OCI-LY7 (cell line): ENCODE measurements at regions of chr10 and their contacts with region 1.

Region 1: DNA sequence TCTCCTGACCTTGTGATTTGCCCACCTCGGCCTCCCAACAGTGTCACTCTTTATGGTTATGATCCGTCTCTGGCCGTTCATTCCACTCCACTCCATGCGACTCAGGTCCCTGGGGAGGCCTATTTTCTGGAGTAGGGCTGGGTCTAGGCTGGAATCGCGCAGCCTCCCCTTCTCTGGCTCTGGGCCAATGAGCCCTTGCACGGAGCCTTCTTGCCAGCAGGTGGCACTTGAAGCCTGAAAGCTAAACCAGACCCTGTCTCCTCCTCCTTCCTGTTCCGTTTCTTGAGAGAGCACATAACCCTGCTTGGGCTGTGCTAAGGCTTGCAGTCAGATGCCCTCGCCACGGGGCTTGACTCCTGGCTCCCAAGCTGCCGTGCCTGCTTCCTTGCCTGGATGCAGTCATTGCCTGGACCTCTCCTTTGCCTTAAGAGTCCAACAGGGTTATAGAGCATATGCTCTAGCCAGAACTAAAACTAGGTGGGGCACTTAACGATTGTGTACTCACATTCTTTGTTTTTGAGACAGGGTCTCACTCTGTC is 9.6 kb upstream of the DNAJB12 start:
- DNase-seq: peak; percentile 93
- H3K4me3 ChIP-seq: no peak overlapping the region
- H3K27ac ChIP-seq: no peak overlapping the region
- H3K4me1 ChIP-seq: peaks cover 6% of the 10 kb centered on the region
- CTCF ChIP-seq: peak; percentile 95

Region 2: GRCh38 chr10:72386916-72387586 is 22.7 kb after region 1 on chr10:
- CTCF ChIA-PET with region 1: no interaction called
- POLR2A ChIA-PET with region 1: no interaction called
- intact Hi-C with region 1: no loop called
- DNase-seq: no peak
- H3K4me3 ChIP-seq: no peak overlapping the region
- H3K27ac ChIP-seq: no peak overlapping the region
- H3K4me1 ChIP-seq: no peaks in the 10 kb centered on the region
- CTCF ChIP-seq: no peak

Region 3: DNA sequence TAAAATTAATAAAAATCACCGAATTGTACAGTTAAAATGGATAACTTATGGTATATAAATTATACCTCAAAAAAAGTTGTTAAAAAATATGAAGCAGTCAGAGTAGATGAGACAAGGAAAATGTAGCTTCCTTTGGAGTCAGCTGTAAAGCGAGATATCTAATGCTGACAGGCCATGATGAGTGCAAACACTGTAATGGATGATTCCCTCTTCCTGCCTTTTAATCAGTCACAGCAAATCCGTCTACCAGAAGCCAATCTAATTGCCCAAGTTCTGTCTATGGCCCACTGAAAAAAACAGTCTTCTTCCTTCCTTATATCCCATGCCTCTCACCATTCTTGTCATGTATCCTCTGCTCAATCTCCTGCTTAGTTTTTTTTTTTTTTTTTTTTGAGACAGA is 50.3 kb after region 1 on chr10:
- CTCF ChIA-PET with region 1: no interaction called
- POLR2A ChIA-PET with region 1: no interaction called
- intact Hi-C with region 1: no loop called
- DNase-seq: no peak
- H3K4me3 ChIP-seq: no peak overlapping the region
- H3K27ac ChIP-seq: no peak overlapping the region
- H3K4me1 ChIP-seq: no peaks in the 10 kb centered on the region
- CTCF ChIP-seq: no peak

Region 4: DNA sequence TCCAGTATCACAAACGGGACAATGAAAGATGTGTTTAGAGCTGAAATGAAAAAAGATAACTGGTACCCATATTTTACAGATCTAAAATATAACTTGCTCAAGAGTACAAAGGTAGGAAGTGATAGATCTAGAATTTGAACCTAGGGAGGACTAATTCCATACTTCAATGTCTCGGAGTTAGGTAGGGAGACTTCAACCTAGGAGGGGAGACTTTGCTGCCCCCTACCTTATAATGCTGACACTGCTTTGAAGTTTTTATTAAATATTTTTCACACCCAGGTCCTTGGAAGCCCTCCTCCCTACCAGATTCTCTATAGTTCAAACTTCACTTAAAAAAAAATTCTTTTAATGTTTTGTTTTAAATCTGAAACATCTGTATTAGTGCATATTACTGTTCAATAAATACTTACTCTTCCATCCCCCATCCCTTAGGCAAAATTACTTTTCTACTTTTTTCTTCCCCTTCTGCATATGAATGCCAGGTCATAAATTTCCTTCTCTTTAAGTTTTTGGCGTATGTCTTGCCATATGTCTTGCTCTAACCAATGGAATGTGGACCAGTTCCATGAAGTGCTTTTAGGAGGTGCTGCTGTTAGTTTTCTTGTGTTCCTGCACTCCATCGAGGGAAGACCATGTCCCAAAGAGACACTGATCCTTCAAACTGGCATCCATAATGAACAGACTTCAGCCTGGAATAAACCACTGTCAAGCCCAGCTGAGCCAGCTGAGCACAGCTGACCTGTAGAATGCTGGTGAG is 203.8 kb after region 1 on chr10:
- CTCF ChIA-PET with region 1: no interaction called
- POLR2A ChIA-PET with region 1: no interaction called
- intact Hi-C with region 1: loop called (anchors 5 kb)
- DNase-seq: peak; percentile 26
- H3K4me3 ChIP-seq: no peak overlapping the region
- H3K27ac ChIP-seq: no peak overlapping the region
- H3K4me1 ChIP-seq: no peaks in the 10 kb centered on the region
- CTCF ChIP-seq: peak; percentile 79

Region 5: DNA sequence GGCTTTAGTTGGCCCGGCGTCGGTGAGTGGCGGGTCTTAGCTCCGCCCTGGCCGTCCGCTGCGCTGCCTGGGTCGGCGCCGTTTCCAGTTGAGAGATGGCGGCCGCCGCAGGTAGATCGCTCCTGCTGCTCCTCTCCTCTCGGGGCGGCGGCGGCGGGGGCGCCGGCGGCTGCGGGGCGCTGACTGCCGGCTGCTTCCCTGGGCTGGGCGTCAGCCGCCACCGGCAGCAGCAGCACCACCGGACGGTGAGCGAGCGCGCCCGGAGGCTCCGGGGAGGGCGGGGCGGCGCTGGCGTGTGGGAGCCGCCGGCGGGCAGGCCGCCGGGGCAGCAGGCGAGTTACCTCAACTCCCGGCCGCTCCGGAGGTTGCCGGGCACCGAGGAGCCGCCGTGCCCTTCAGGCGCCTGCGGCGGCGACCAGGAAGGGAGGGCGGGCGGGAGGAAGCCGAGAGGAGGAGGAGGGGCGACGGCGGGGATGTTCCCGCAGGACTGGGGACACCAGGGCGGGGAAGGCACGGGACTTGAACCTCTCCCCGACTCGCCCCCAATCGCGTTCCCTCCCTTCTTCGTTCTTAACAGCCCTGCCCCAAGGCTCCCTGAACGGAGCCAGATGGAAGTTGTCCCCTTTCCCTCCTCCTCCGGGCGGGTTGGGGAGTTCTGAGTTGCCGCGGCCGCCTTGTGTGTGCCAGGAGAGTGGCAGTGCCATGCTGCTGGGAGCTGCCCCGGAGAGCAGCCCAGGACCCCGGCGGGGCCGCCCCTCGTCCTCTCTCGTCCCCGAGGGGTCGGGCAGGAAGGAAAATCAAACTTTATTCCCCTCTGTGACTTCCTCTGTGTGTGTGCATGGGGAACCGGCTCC is 328.0 kb after region 1 on chr10 and contains the start of gene MCU:
- CTCF ChIA-PET with region 1: no interaction called
- POLR2A ChIA-PET with region 1: no interaction called
- intact Hi-C with region 1: loop called (anchors 2 kb)
- DNase-seq: peak; percentile 95
- H3K4me3 ChIP-seq: peak within 1 kb of the TSS; percentile 97
- H3K27ac ChIP-seq: peak within 1 kb of the TSS; percentile 37
- H3K4me1 ChIP-seq: peaks cover 31% of the 10 kb centered on the region
- CTCF ChIP-seq: no peak
- total RNA-seq, gene MCU: 7.7 and 9.9 TPM in 2 replicates

Region 6: GRCh38 chr10:72834183-72834825 is 470.0 kb after region 1 on chr10:
- CTCF ChIA-PET with region 1: no interaction called
- POLR2A ChIA-PET with region 1: no interaction called
- intact Hi-C with region 1: loop called (anchors 1 kb)
- DNase-seq: peak; percentile 60
- H3K4me3 ChIP-seq: no peak overlapping the region
- H3K27ac ChIP-seq: no peak overlapping the region
- H3K4me1 ChIP-seq: no peaks in the 10 kb centered on the region
- CTCF ChIP-seq: peak; percentile 86

Region 7: GRCh38 chr10:72875250-72876055 is 511.1 kb after region 1 on chr10:
- CTCF ChIA-PET with region 1: no interaction called
- POLR2A ChIA-PET with region 1: no interaction called
- intact Hi-C with region 1: loop called (anchors 2 kb)
- DNase-seq: peak; percentile 40
- H3K4me3 ChIP-seq: no peak overlapping the region
- H3K27ac ChIP-seq: no peak overlapping the region
- H3K4me1 ChIP-seq: no peaks in the 10 kb centered on the region
- CTCF ChIP-seq: peak; percentile 84

Region 8: GRCh38 chr10:73060738-73061635 is 696.7 kb after region 1 on chr10:
- CTCF ChIA-PET with region 1: no interaction called
- POLR2A ChIA-PET with region 1: no interaction called
- intact Hi-C with region 1: loop called (anchors 1 kb)
- DNase-seq: peak; percentile 48
- H3K4me3 ChIP-seq: no peak overlapping the region
- H3K27ac ChIP-seq: no peak overlapping the region
- H3K4me1 ChIP-seq: peaks cover 4% of the 10 kb centered on the region
- CTCF ChIP-seq: peak; percentile 90